ENCODE measurements at regions of chr2 and their contacts with region 1.

Region 1: DNA sequence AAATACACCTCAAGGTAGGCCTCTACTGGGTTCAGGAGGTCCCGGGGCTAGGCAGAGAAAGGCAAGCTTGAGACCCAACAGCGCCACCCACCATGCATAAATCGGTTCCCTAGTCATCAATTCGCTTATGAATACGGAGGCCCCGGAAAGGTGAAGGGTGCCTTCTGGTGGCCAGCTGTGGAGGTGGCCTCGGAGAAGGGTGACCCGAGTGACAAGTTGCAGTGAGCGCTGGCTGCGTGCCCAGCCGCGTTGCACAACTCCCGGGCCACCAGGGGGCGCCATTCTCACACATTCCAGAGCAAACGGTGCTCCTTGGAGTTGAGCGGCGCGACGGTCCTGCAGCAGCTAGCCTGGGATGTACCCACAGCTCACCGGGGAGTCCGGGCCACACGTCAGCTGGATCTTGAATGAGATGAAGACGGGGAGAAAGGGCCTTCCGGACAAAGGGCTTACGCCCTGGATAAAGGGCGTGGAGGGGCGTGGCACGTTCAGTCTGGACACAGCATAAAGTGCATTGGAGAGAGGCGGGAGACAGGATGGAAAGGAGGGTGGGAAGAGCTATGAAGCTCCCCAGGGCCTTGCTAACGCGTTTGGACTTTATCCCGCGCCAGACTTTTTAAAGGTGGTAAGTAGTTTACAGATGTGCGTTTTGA is 20.4 kb downstream of the TMSB10 start:
- DNase-seq: peak; percentile 97

Region 2: GRCh38 chr2:84495539-84496146 is 430.2 kb before region 1 on chr2:
- intact Hi-C with region 1: loop called (anchors 2 kb)
- DNase-seq: no peak

Region 3: GRCh38 chr2:84881581-84882414 is 44.1 kb before region 1 on chr2:
- intact Hi-C with region 1: loop called (anchors 5 kb)
- DNase-seq: peak; percentile 89

Region 4: DNA sequence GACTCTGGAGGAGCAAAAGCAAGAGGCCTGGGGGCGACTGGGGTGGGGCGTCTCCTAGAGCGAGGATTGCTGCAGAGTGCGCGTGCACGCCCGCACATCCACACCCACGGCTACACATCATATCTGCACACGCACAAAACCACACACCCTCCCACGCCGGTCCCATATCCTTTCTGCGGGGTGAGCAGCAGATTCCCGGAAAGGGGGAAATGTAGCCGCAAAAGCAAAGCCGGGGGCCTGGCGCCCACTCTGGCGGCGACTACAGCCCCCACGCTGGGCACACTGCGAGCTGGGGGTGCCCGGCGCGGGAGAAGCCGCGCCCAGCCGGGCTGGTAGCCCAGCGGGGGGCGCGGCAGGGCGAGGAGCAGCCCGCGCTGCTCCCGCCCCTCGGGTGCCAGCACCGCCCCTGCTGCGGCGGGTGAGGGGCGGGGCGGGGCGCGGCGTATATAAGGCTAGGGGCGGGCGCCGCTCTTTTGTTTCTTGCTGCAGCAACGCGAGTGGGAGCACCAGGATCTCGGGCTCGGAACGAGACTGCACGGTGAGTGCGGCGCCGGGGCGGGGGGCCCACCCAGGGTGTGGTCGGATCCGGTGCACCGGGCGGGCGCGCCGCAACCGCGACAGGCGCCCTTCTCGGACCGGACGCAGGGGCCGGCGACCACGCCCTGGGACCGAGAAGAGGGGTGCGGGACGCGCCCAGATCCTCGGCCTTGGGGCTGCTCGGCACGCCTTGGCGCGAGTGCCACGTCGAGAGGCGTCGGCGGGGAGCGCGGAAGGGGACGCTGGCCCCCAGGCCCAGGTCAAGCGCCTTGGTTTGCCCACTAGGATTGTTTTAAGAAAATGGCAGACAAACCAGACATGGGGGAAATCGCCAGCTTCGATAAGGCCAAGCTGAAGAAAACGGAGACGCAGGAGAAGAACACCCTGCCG is 20.4 kb before region 1 on chr2 and contains the start of gene TMSB10:
- intact Hi-C with region 1: loop called (anchors 1 kb)
- DNase-seq: peak; percentile 96
- total RNA-seq, gene TMSB10: 452 TPM

Region 5: DNA sequence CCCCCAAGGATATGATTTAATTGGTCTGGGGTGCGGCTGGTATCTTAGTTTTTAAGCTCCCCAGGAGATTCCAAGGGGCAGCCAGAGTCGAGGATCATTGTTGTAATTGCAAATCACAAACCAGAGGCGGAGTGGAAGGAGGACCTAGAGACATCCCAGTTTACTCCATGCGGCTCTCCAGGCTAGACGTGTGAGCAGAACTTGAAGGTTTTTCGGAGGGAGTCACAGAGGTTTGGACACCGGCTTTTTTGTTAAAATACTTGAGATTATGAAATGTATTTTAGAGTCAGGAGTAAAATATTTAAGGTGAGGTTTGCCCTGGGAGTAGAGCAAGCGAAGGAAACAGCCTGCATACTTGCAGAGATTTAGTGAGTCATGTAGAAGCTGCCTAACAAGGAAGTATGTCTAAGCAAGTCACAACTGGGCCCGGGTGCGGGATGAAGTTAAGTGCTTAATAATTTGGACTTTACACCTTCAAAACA is 362.4 kb after region 1 on chr2:
- intact Hi-C with region 1: loop called (anchors 10 kb)
- DNase-seq: peak; percentile 17